ENCODE measurements at regions of chr2 and their contacts with region 1.

Region 1: DNA sequence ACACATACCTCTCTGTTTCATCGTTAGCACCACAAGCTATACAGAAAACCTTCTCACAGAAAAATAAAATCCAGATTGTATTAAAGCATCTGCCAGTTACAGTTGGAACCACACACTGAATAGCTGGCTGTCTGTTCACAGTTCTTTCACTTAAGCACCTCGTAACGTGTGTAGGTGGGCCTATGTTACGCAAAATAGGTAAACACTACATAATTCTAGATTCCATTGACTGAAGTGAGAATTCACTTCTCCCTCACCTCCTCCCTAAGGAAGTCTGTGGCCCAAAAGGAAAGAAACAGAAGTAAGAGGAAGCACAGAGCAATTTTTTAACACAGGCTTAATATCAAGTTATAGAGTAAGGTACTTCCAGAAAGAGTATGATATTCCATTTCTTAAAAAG is 24.9 kb downstream of the PELI1 start:
- DNase-seq: no peak
- CTCF ChIP-seq: no peak

Region 2: DNA sequence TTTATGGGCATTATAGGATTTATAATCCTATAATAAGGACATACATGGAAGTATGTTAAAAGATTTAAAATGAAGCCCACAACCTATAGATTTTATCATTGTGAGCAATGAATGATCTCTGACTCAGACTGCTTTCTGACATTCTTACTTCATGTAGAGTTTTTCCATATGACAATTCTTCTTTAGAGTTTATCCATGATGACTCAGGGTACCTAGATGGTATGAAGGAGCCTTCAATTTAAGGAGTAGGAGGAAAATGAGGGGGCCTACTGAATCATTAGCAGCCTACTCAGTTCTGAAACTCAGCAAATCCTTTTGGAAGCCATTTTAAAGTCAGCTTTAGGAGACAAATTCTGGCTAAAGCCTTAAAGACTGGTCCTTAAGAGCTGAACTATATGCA is 14.5 kb after region 1 on chr2:
- CTCF ChIA-PET with region 1: interaction called, 28 read pairs
- POLR2A ChIA-PET with region 1: interaction called, 3 read pairs
- DNase-seq: no peak
- CTCF ChIP-seq: no peak